K562 (cell line): ENCODE measurements at regions of chr20 and their contacts with region 1.

Region 1: GRCh38 chr20:62401331-62401779 is 5.7 kb downstream of the CABLES2 start:
- DNase-seq: peak in 2 of 4 experiments; percentile 49 to 54
- ATAC-seq: peak; percentile 54
- H3K4me3 ChIP-seq: no peak overlapping the region
- H3K27ac ChIP-seq: no peak overlapping the region
- H3K4me1 ChIP-seq: peaks cover under 1 to 54% of the 10 kb centered on the region in 2 experiments; a peak in 4 of 5 replicates
- H3K27me3 ChIP-seq: no peaks in the 10 kb centered on the region
- CTCF ChIP-seq: peak; percentile 46 to 54 (median 47)
- EP300 ChIP-seq: no peak
- POLR2A ChIP-seq: no peak
- RAD21 ChIP-seq: peak in 1 of 2 experiments; percentile 27; a peak in 1 of 4 replicates

Region 2: DNA sequence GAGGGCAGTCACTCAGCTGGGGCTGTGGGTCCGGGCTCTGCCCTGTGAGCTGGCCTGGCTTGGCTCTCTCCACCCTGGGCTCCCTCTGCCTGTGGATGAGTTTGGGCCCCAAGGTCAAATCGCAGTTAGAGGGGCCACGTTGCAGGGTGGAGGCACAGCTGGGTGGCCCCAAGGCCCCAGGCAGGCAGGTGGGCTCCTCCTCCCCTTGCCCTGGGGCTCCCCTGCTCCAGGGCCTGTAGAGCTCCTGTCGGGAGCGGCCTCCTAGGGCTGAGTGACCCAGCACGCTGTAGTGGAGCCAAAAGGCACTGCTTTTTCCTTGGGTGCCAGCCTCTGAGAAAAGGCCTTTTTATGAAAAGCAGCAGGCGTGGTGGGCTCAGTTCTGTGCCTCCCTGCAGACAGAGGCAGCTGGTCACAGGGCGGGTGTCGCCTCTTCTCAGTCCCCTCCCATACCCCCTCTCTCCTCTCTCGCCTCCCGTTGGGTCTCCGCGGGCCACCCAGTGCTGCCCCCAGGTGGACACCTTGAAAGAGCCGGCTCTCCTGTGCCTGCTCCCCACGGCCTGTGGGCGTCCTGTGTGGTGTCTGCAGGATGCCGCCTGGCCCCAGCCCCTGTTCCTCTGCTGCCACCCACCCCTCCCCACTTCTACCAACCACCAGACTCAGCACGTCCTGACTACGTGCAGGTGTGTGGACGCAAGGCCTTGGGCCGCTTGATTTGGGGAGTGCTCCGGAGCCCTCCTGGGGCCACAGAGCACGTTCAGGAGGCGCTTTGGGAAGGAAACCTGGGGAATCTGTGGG is 244.6 kb before region 1 on chr20:
- CTCF ChIA-PET with region 1: no interaction called
- POLR2A ChIA-PET with region 1: no interaction called
- in situ Hi-C with region 1: no loop called
- intact Hi-C with region 1: no loop called
- DNase-seq: peak; percentile 75 to 84 (median 80)
- ATAC-seq: peak; percentile 99
- H3K4me3 ChIP-seq: no peak overlapping the region
- H3K27ac ChIP-seq: peak overlapping the region; percentile 24; the same call in 1 of the 3 replicates
- H3K4me1 ChIP-seq: peaks cover 2 to 44% of the 10 kb centered on the region in 2 experiments; a peak in 3 of 5 replicates
- H3K27me3 ChIP-seq: no peaks in the 10 kb centered on the region
- CTCF ChIP-seq: peak; percentile 78 to 95 (median 83)
- EP300 ChIP-seq: no peak
- POLR2A ChIP-seq: no peak
- RAD21 ChIP-seq: peak in 1 of 2 experiments; percentile 67; a peak in 2 of 4 replicates

Region 3: GRCh38 chr20:62367136-62367632 is 34.2 kb before region 1 on chr20 and contains the start of gene LAMA5:
- CTCF ChIA-PET with region 1: no interaction called
- POLR2A ChIA-PET with region 1: no interaction called
- in situ Hi-C with region 1: no loop called
- intact Hi-C with region 1: no loop called
- DNase-seq: peak; percentile 73 to 87 (median 85)
- ATAC-seq: peak; percentile 61
- H3K4me3 ChIP-seq: peak within 1 kb of the TSS; percentile 78
- H3K27ac ChIP-seq: peak within 1 kb of the TSS; percentile 69
- H3K4me1 ChIP-seq: peaks cover 57 to 100% of the 10 kb centered on the region in 2 experiments
- H3K27me3 ChIP-seq: no peaks in the 10 kb centered on the region
- CTCF ChIP-seq: 0 out of 6 replicates have a peak, but pooled peaks of 1 of the 3 experiments have one; percentile 1
- EP300 ChIP-seq: no peak
- POLR2A ChIP-seq: no peak
- RAD21 ChIP-seq: no peak
- polyA plus RNA-seq, gene LAMA5: 0.31 to 0.48 TPM

Region 4: GRCh38 chr20:62386383-62387218 is 14.8 kb before region 1 on chr20 and contains the start of gene RPS21:
- CTCF ChIA-PET with region 1: no interaction called
- POLR2A ChIA-PET with region 1: interaction called, 28 read pairs
- in situ Hi-C with region 1: no loop called
- intact Hi-C with region 1: no loop called
- DNase-seq: peak; percentile 87 to 96 (median 92)
- ATAC-seq: peak; percentile 92
- H3K4me3 ChIP-seq: peak within 1 kb of the TSS; percentile 100
- H3K27ac ChIP-seq: peak within 1 kb of the TSS; percentile 95
- H3K4me1 ChIP-seq: peaks cover 13 to 39% of the 10 kb centered on the region in 2 experiments; a peak in 4 of 5 replicates
- H3K27me3 ChIP-seq: no peaks in the 10 kb centered on the region
- CTCF ChIP-seq: no peak
- EP300 ChIP-seq: no peak; the same call in 1 of the 2 replicates
- POLR2A ChIP-seq: peak; percentile 92
- RAD21 ChIP-seq: no peak
- polyA plus RNA-seq, gene RPS21: 3,588 to 3,968 TPM